Activated T-helper 2 cell treated with anti-CD3 and anti-CD28 coated beads, Interferon-gamma antibody, Interleukin-2, Interleukin-4, amounts not matched to agents 10 μg/mL and 5 μg/mL and 100 μg/mL, durations not matched to agents 14 hours and 24 hours and 36 hours (primary cell): ENCODE measurements at regions of chr12 and their contacts with region 1.

Region 1: GRCh38 chr12:76031537-76032073 is at the start of gene PHLDA1:
- DNase-seq: peak; percentile 94
- H3K4me3 Mint-ChIP-seq: peak within 1 kb of the TSS; percentile 97
- H3K27ac Mint-ChIP-seq: peak within 1 kb of the TSS; percentile 97
- H3K4me1 Mint-ChIP-seq: peaks cover 45% of the 10 kb centered on the region
- H3K27me3 Mint-ChIP-seq: no peaks in the 10 kb centered on the region
- total RNA-seq, gene PHLDA1: 43.2 and 44.2 TPM in 2 replicates

Region 2: GRCh38 chr12:75511116-75512048 is 520.2 kb before region 1 on chr12 and contains the start of gene KRR1:
- intact Hi-C with region 1: loop called (anchors 1 kb)
- DNase-seq: peak; percentile 91
- H3K4me3 Mint-ChIP-seq: peak within 1 kb of the TSS; percentile 96
- H3K27ac Mint-ChIP-seq: peak within 1 kb of the TSS; percentile 98
- H3K4me1 Mint-ChIP-seq: peaks cover 30% of the 10 kb centered on the region
- H3K27me3 Mint-ChIP-seq: no peaks in the 10 kb centered on the region
- total RNA-seq, gene KRR1: 114 and 119 TPM in 2 replicates

Region 3: DNA sequence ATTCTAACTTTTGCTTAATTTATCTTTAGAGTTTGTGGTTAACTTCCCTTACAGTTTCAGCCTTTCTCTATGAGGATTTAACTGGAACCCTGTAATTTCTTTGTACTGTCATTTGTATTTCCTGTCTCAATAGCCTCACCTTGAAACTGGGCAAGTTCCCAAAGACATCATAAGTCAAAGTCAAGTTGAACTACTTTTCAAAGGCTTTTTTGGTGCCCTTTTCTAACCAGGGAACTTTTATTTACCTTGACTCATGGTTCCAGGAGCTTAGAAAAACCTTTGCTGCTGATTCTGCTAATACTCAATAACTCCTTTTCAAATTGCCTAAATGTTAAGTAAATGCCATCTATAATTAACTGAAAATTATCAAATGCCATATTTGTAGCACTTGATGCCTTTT is 319.4 kb before region 1 on chr12:
- intact Hi-C with region 1: loop called (anchors 2 kb)
- DNase-seq: no peak
- H3K4me3 Mint-ChIP-seq: no peak overlapping the region
- H3K27ac Mint-ChIP-seq: no peak overlapping the region
- H3K4me1 Mint-ChIP-seq: peaks cover 26% of the 10 kb centered on the region
- H3K27me3 Mint-ChIP-seq: peaks cover 12% of the 10 kb centered on the region

Region 4: DNA sequence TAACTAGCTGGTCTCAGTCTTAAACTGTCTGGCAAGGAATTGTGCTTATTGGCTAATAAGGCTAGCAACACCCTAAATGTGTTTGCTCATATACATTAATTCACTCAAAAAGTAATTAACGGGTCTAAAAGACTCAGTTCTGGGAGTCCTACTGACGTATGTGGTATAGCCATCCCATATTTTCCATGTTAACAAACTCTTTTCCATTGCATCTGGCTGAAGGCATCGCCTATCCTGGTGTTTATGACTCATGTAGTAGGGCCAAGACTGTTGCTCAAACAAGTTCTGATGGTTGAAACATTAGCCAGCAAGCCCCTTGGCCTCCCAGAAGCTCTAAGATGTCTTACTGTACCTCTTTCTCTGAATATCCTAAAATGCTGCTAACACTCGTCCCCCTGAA is 98.5 kb before region 1 on chr12:
- intact Hi-C with region 1: loop called (anchors 2 kb)
- DNase-seq: no peak
- H3K4me3 Mint-ChIP-seq: no peak overlapping the region
- H3K27ac Mint-ChIP-seq: peak overlapping the region; percentile 73
- H3K4me1 Mint-ChIP-seq: peaks cover 44% of the 10 kb centered on the region
- H3K27me3 Mint-ChIP-seq: no peaks in the 10 kb centered on the region

Region 5: DNA sequence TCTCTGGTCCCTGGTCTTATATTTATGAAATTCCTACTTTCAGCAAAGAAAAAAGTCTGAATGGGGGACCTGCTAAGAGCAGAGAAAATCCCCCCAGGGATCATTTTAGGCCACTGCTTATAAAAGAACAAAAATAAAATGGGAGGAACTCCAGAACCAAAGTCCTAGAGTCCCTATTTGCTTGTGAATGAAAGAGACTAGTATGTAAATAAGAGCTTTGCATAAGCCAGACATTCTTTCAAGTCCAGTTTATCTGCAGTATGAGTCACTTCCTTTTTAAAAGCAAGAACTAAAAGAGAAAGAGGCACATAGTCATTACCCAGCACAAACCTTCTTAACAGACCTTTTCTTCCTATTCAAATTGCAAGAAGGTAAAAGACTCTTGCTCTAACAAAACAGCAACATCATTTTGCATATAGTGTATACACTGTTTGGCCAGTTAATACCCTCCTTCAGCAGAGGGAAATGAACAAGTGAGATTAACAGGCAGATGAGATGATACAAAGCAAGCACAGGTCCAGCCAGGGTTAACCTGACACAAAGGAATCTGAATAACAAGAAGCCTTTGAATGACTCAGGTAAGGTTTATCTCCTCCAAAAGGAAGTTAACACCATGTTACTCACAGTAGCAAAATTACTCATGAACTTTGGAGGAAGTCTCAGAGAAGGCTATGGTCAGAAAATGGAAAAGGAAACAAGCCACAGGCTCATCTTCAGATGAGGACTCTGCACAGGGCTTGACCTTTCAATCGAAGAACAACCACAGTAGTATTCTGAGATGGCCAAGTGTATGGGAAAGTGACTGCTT is 87.3 kb before region 1 on chr12:
- intact Hi-C with region 1: loop called (anchors 1 kb)
- DNase-seq: no peak
- H3K4me3 Mint-ChIP-seq: peak overlapping the region; percentile 52
- H3K27ac Mint-ChIP-seq: peak overlapping the region; percentile 97
- H3K4me1 Mint-ChIP-seq: peaks cover 32% of the 10 kb centered on the region
- H3K27me3 Mint-ChIP-seq: no peaks in the 10 kb centered on the region

Region 6: GRCh38 chr12:76020731-76021672 is 10.6 kb before region 1 on chr12:
- intact Hi-C with region 1: loop called (anchors 1 kb)
- DNase-seq: peak; percentile 67
- H3K4me3 Mint-ChIP-seq: peak overlapping the region; percentile 66
- H3K27ac Mint-ChIP-seq: peak overlapping the region; percentile 99
- H3K4me1 Mint-ChIP-seq: peaks cover 60% of the 10 kb centered on the region
- H3K27me3 Mint-ChIP-seq: no peaks in the 10 kb centered on the region

Region 7: DNA sequence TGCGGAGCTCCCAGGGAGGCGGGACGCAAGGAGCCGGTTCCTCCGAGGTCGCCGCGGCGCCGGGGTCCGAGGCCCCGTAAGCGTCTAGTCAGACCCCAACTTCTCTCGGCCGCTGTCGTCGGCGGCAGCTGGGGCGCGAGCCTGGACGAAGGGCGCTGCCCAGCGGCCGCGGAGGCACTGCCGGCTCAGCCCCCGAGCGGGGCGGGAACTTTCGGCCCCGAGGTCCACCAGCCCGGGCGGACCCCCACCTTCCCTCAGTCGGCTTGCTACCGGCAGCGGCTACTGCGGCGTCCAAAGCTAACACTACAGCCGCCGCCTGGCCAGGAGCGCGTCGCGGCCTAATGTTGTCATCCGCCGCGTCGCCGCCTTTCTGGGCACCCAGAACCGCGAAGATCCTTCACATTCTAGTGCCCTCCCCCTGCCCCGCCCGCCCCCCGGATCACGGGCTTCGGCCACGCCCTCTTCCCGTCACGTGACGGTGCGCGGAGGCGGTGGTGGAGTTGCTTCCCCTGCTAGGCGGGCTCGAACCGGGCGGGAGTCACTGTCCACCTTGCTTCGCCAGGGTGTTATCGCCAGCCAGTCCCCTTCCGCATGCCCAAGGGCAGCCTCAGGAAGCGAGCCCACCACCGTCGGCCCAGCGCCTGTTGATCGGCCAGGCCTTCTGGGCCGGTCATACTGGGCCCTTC is 527.9 kb after region 1 on chr12 and contains the start of gene OSBPL8:
- intact Hi-C with region 1: loop called (anchors 5 kb)
- DNase-seq: peak; percentile 89
- H3K4me3 Mint-ChIP-seq: peak within 1 kb of the TSS; percentile 93
- H3K27ac Mint-ChIP-seq: peak within 1 kb of the TSS; percentile 96
- H3K4me1 Mint-ChIP-seq: peaks cover 39% of the 10 kb centered on the region
- H3K27me3 Mint-ChIP-seq: no peaks in the 10 kb centered on the region
- total RNA-seq, gene OSBPL8: 87.9 TPM in 2 replicates